Activated T-helper 2 cell treated with anti-CD3 and anti-CD28 coated beads, Interferon-gamma antibody, Interleukin-2, Interleukin-4, amounts not matched to agents 10 μg/mL and 5 μg/mL and 100 μg/mL, durations not matched to agents 14 hours and 24 hours and 36 hours (primary cell): ENCODE measurements at regions of chr1 and their contacts with region 1.

Region 1: GRCh38 chr1:220690140-220691025 is at the start of gene C1orf115:
- DNase-seq: peak; percentile 68
- H3K4me3 Mint-ChIP-seq: peak within 1 kb of the TSS; percentile 77
- H3K27ac Mint-ChIP-seq: no peak within 1 kb of the TSS
- H3K4me1 Mint-ChIP-seq: peaks cover 4% of the 10 kb centered on the region
- H3K27me3 Mint-ChIP-seq: peaks cover 27% of the 10 kb centered on the region
- total RNA-seq, gene C1orf115: 0.11 TPM in 1 of 2 replicates, not detected in the other

Region 2: GRCh38 chr1:220511768-220512167 is 178.6 kb before region 1 on chr1:
- intact Hi-C with region 1: no loop called
- DNase-seq: no peak
- H3K4me3 Mint-ChIP-seq: no peak overlapping the region
- H3K27ac Mint-ChIP-seq: no peak overlapping the region
- H3K4me1 Mint-ChIP-seq: no peaks in the 10 kb centered on the region
- H3K27me3 Mint-ChIP-seq: no peaks in the 10 kb centered on the region

Region 3: DNA sequence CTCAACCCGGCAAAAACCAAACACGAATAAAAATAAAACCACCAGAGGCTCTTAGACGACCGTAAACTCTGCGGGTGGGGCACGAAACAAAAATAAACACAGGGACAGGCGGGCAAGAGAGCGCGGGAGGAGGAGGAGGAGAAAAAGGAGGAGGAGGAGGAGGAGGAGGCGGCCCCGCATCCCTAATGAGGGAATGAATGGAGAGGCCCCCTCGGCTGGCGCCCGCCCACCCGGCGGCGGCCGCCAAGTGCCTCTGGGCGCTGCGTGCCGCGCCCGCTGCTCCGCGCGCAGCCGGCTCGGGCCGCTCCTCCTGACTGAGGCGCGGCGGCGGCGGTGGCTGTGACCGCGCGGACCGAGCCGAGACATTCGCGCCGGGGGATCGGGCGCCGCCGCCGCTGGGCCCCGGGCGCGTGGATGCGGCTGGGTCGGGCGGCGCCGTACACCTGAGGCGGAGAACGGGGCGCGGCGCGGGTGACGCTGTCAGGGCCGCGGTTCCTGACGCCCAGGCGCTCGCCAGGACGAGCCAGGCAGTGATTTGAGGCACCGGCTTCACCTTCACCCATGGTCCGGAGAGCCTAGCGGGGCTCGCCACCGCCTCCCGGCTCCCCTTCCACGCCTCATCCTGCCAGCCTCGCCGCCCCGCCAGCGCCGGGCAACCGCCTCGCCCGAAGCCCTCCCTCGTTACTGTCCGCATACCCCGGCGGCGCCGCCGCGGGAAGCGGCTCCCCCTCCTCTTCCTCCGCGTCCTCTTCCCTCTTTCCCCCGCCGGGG is 162.3 kb before region 1 on chr1 and contains the start of gene MARK1:
- intact Hi-C with region 1: loop called (anchors 10 kb)
- DNase-seq: no peak
- H3K4me3 Mint-ChIP-seq: peak within 1 kb of the TSS; percentile 81
- H3K27ac Mint-ChIP-seq: no peak within 1 kb of the TSS
- H3K4me1 Mint-ChIP-seq: peaks cover 8% of the 10 kb centered on the region
- H3K27me3 Mint-ChIP-seq: peaks cover 63% of the 10 kb centered on the region
- total RNA-seq, gene MARK1: not detected in 2 replicates

Region 4: DNA sequence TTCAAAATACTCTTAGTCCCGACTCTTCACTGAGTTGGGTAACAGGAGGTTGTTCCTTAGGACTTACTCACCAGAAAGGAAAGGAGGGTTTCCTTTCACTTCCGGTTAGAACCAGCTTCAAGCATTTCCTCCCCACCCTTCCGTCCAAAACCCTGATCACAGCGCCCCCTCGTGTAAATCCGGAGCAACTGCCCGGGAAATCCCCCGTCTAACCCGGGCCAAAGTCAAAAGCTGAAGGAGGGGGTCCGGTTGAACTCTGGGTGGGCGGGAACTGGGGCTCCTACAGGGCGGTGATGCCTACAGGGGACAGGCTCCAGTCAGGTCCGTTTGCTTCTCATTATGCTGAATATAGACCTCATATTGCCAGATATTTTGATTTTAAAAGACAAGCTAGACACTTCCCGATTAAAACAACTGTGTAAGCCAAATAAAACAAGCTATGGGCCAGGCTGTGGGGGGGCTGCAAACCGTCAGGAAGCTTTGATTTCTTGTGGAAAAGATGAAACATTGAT is 42.8 kb after region 1 on chr1:
- intact Hi-C with region 1: loop called (anchors 5 kb)
- DNase-seq: peak; percentile 70
- H3K4me3 Mint-ChIP-seq: no peak overlapping the region
- H3K27ac Mint-ChIP-seq: no peak overlapping the region
- H3K4me1 Mint-ChIP-seq: peaks cover 2% of the 10 kb centered on the region
- H3K27me3 Mint-ChIP-seq: peaks cover 15% of the 10 kb centered on the region

Region 5: DNA sequence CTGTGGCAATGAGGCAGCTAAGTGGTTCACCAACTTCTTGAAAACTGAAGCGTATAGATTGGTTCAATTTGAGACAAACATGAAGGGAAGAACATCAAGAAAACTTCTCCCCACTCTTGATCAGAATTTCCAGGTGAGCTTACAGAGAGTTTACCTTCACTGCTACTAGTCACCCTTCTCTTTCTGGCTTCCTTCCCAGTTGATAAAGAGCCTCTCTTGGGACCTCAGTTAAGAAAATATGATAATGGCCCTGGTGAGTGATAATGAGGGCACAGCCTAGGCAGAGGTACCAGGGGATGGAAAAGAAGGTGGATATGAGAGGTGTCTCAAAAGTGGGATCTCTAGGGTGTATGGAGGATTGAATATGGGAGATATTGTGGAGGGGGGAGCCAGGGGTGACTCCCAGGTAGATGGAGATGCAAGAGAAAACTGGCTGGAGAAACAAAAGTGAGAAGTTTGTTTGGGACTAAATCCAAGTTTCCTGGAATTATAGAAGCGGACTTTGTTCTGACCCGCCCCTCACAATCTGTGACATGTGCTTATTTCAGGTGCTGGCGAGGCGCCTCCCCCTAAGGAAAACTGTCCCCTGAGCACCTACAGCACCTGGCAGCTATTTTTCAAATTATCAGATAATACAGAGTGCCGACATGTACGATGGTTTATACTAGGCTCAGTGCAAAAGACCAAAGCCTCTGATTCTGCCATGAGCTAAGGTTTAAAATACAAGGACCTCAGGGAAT is 71.5 kb after region 1 on chr1:
- intact Hi-C with region 1: no loop called
- DNase-seq: no peak
- H3K4me3 Mint-ChIP-seq: no peak overlapping the region
- H3K27ac Mint-ChIP-seq: no peak overlapping the region
- H3K4me1 Mint-ChIP-seq: no peaks in the 10 kb centered on the region
- H3K27me3 Mint-ChIP-seq: peaks cover 4% of the 10 kb centered on the region

Region 6: DNA sequence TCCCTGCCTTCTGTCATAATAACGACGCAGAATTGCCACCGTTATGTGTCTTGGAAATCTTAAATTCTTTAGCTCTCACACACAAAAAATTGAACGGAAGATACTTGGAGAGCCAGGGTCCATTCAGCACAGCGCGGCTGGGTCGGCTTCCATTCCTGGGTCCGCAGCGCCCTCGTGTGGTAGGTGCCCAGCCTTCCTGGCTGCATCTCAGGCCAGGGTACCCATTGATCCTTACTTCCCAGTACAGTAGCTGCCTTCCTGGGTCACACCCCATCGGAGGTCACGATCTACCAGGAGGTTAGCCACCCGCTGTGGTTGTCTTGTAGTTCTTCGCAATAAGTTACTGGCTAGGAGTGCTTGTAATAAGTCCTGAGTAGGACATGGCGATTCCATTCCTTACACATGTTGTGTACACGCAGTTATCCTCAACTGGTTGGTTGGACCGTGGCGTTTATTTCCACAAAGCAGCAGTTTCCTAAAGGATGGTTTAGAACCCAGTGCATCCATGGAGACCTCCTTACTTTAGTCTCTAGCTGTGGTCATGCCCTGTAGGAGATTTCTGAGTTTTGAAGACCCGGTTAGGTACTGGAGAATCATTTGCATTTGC is 86.4 kb after region 1 on chr1:
- intact Hi-C with region 1: loop called (anchors 1 kb)
- DNase-seq: peak; percentile 39
- H3K4me3 Mint-ChIP-seq: no peak overlapping the region
- H3K27ac Mint-ChIP-seq: no peak overlapping the region
- H3K4me1 Mint-ChIP-seq: peaks cover 2% of the 10 kb centered on the region
- H3K27me3 Mint-ChIP-seq: peaks cover 6% of the 10 kb centered on the region

Region 7: DNA sequence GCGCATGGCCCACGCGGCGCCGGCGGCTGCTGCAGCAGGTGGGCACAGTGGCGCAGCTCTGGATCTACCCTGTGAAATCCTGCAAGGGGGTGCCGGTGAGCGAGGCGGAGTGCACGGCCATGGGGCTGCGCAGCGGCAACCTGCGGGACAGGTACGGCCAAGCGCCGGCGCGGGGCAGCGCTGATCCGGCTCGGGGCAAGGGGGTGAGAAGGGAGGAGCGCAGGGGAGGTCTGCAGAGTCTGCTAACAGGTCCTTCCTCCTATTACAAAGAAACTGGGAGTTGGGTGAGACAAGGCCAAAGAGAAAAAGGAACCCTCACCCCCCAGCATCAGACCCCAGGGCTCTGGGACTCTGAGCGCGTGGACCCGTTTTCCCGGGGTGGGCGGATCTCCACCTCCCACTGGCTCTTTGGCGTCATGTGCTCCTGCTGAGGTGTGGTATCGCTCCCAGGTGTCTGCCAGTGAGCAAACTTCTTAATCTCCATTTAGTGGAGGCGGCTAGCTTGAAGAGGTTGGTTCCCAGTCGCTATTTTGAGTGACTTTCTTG is 96.8 kb after region 1 on chr1:
- intact Hi-C with region 1: no loop called
- DNase-seq: no peak
- H3K4me3 Mint-ChIP-seq: no peak overlapping the region
- H3K27ac Mint-ChIP-seq: no peak overlapping the region
- H3K4me1 Mint-ChIP-seq: no peaks in the 10 kb centered on the region
- H3K27me3 Mint-ChIP-seq: peaks cover 53% of the 10 kb centered on the region